ENCODE measurements at regions of chr6 and their contacts with region 1.

Region 1: GRCh38 chr6:34248727-34249551 is at the start of gene SMIM29:
- DNase-seq: peak; percentile 97
- CTCF ChIP-seq: peak; percentile 74

Region 2: GRCh38 chr6:34161857-34162515 is 87.0 kb before region 1 on chr6:
- CTCF ChIA-PET with region 1: interaction called, 12 read pairs
- POLR2A ChIA-PET with region 1: interaction called, 7 read pairs
- DNase-seq: no peak
- CTCF ChIP-seq: no peak

Region 3: DNA sequence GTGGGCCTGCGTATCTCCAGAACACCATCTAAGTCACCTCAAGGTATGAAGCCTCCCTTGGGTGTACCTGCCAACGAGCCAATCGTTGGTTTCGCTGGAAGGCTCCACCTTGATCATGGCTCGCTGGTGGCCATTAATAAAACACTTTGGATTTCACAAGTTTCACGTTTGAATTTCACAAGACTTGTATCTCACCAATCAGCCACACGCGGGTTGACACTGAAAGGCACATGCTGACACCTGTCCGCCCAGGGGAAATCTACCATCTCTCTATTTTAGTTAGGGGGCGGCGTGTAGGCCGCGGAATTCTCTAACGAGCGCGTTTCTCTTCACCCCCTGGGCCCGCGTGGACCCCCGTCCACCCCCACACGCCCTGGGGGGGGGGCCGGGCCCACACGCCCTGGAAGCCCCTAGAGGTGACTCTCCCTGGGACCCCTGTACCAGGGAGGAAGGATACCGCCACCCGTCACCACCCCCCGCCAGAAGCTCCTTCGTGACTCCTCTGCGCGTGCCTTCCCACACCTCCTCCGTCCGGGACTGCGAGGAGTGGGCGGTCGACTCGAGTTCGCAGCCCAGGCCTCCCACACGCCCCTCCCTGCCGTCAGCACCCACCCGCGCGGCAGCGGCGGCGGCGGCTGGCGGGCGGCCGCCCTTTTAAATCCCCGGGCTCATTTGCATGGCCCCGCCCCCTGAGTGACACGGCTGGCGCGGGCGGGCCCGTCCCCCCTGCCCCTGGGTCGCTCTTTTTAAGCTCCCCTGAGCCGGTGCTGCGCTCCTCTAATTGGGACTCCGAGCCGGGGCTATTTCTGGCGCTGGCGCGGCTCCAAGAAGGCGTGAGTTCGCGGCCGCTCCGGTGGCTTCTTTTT is 12.6 kb before region 1 on chr6 and contains the start of gene HMGA1:
- CTCF ChIA-PET with region 1: interaction called, 12 read pairs
- POLR2A ChIA-PET with region 1: interaction called, 28 read pairs
- DNase-seq: peak; percentile 95
- CTCF ChIP-seq: no peak

Region 4: GRCh38 chr6:34383161-34383631 is 134.3 kb after region 1 on chr6:
- CTCF ChIA-PET with region 1: interaction called, 11 read pairs
- POLR2A ChIA-PET with region 1: no interaction called
- DNase-seq: no peak
- CTCF ChIP-seq: no peak

Region 5: DNA sequence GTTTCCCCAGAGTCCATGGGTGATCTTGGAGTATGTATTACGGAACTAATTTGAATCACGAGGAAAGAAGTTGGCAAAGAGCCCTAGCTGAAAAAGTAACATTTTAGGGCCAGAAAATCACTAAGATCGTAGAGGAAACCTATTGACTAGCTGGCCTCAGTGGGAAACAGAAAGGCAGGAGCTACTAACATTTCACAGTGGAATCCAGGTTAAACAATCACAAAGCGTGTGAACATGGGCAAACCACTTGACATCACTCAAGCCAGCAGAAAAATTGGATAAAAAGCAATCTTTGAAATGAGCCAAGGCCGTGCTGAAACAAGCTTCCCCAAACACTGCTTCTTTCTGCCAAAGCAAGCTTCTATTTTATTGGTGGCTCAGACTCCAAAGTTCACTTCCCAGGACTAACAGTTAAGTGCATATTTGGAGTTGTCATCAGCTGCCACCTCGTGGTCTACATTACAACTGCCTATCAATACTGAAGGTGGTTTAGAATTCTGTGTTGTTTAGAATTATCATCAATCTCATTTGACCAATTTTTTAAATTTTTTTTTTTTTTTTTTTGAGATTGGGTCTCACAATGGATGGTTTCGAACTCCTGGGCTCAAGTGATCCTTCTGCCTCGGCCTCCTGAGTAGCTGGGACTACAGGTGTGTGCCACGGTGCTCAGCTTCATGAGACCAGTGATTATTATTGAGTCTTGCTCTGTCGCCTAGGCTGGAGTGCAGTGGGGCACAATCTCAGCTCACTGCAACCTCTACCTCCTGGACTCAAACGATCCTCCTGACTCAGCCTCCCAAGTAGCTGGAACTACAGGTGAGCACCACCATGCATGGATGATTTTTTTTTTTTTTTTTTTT is 166.3 kb after region 1 on chr6:
- CTCF ChIA-PET with region 1: interaction called, 92 read pairs
- POLR2A ChIA-PET with region 1: interaction called, 13 read pairs
- DNase-seq: peak; percentile 55
- CTCF ChIP-seq: peak; percentile 55

Measured in GM10248 (cell line).